Dorsolateral prefrontal cortex (tissue), 120 donors: ENCODE measurements at regions of chr9 and their contacts with region 1.

Region 1: DNA sequence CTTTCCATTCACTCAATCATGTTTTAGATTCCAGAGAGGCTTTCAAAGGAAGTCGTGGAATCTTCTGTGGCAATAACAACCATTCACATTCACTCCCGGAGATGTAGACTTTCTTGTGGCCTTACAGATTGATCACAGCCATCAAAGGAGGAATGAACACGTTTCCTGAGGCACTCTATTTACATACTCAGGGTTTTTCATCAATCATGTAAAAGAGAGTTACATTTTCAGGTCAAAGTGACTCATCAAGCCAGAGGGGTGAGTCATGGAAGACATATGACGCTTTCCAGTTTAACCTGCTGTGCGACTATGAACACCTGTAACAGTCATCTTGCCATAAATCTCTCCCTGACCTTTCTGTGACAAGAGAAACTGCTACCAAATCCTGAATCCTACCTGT is 39.3 kb upstream of the RAD23B start:
- DNase-seq: no peak
- H3K4me3 ChIP-seq: no peak overlapping the region
- H3K27ac ChIP-seq: no peak overlapping the region
- H3K27me3 ChIP-seq: no peaks in the 10 kb centered on the region
- CTCF ChIP-seq: no peak

Region 2: DNA sequence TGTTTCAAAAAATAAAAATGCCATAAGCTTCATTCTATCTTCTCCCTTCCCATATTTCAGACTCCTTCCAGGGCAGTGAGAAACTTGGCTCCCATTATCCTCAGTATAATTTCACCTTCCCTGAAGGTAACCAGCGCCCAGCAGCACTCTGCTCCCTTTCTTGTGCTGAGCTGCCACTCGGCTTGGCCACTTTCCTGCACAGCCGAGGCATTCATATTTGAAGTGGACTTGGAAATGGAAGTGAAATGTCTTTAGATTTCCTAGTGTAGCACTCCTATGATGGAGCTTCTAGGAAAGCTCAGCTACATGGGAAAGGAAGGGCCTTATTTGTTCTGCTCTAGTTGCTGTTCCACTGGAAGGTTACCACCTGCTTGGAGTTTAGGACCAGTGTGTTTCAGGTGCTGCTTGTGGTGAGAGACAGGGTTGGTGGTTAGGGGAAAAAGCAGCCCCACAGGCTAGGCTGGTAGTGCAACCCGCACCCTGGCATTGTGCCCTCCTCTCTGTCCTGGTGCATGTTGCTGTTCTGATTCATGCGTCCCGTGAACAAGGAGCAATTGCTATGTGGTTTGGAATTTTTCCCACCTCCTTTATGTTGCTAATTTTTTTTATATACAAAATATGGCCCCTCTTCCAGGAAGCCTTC is 93.1 kb after region 1 on chr9:
- intact Hi-C with region 1: loop called in 1 of 2 experiments (anchors 5 kb)
- DNase-seq: peak in 5 of 10 donors; percentile 28 to 66 (median 55)
- H3K4me3 ChIP-seq: no peak overlapping the region
- H3K27ac ChIP-seq: peak overlapping the region in 43 of 59 donors; percentile 0 to 83 (median 59)
- H3K27me3 ChIP-seq: no peaks in the 10 kb centered on the region
- CTCF ChIP-seq: no peak